Upper lobe of right lung (tissue), 1 donor: ENCODE measurements at regions of chr16 and their contacts with region 1.

Region 1: DNA sequence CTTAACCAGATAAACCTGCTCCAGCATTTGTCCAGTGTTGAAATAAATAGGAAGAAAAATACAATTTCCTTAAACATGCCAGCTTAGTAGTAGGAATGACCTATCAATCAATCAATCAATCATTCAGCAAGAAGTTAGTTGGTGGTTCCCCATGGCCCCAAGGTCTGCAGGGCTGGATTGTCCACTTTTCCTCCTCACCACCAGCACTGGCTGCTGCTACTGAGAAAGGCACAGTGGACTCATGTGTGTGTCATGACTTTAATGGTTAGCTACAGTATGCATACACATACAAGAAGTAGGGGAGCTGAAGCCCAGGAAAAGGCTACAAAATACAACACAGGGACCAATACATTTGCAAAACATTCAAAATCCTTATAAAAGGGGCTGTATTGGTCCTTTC is 4.4 kb downstream of the SETD6 start:
- DNase-seq: no peak
- ATAC-seq: no peak
- H3K4me3 ChIP-seq: no peak overlapping the region
- H3K27ac ChIP-seq: no peak overlapping the region
- H3K4me1 ChIP-seq: peaks cover 11% of the 10 kb centered on the region
- H3K27me3 ChIP-seq: no peaks in the 10 kb centered on the region
- CTCF ChIP-seq: no peak

Region 2: DNA sequence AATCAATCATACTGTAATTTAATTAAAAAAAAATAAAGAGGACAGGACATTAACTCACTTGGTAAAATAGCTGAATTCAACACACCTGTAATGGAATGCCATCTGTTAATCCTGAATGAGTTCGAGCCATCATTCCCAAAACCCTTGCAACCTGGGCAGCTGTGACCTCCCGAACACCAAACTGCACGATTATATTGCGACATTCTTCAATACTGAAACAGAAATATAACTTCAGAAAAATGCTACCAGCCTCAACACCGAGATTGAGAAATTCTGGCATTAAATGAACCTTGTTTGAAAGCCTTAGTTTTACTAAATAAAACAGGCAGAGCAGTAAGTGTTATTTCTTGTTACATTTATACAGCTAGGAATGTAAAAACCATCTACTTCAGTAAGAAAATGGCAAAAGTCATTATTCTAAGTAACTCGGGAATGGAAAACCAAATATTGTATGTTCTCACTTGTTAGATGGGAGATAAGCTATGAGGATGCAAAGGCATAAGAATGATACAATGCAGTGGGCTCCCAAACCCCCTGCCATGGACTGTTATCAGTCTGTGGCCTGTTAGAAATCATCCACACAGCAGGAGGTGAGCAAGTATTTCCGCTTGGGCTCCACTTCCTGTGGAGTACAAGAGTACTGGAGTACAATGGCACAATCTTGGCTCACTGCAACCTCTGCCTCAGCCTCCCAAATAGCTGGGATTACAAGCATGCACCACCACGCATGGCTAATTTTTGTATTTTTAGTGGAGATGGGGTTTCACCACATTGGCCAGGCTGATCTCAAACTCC is 63.5 kb after region 1 on chr16:
- intact Hi-C with region 1: loop called (anchors 10 kb)
- DNase-seq: no peak
- ATAC-seq: no peak
- H3K4me3 ChIP-seq: no peak overlapping the region
- H3K27ac ChIP-seq: no peak overlapping the region
- H3K4me1 ChIP-seq: no peaks in the 10 kb centered on the region
- H3K27me3 ChIP-seq: no peaks in the 10 kb centered on the region
- CTCF ChIP-seq: no peak